ENCODE measurements at regions of chr6 and their contacts with region 1.

Region 1: DNA sequence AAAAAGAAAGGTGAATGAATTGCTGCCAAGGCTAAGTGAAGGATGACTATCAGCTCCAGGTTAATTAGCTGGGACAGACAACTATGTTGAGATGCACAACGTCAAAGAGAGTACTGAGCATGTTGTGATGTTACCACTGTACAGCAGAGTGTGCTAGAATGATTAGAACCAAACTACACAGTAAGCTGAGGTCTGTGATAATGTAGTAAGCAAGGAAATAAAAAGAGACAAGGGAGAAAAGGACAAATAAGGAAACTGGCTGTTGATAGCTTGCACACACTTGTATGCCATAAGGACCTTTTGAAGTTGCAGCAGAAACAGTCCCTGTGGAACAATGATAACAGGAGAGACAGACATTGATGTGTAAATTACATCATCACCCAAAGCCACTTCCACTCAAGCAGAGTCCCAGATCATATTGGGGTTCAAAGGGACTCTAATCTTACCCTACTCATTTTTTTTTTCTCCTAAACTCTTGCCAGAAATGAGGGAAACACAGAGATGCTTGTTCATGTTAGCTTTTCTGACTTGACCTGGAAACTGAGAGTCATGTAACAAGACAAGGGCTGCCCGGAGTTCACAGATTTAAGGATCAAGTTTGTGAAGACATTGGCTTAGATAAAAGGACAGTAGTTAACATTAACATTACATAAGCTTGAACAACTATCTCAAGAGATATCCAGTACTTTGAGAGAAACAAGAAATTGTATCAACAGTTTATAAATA is 189.9 kb downstream of the CENPW start:
- DNase-seq: no peak
- H3K4me3 ChIP-seq: no peak overlapping the region
- H3K4me3 Mint-ChIP-seq: no peak overlapping the region
- H3K27ac Mint-ChIP-seq: no peak overlapping the region
- H3K4me1 ChIP-seq: no peaks in the 10 kb centered on the region
- H3K4me1 Mint-ChIP-seq: no peaks in the 10 kb centered on the region
- H3K27me3 ChIP-seq: no peaks in the 10 kb centered on the region
- H3K27me3 Mint-ChIP-seq: no peaks in the 10 kb centered on the region
- CTCF ChIP-seq: no peak

Region 2: DNA sequence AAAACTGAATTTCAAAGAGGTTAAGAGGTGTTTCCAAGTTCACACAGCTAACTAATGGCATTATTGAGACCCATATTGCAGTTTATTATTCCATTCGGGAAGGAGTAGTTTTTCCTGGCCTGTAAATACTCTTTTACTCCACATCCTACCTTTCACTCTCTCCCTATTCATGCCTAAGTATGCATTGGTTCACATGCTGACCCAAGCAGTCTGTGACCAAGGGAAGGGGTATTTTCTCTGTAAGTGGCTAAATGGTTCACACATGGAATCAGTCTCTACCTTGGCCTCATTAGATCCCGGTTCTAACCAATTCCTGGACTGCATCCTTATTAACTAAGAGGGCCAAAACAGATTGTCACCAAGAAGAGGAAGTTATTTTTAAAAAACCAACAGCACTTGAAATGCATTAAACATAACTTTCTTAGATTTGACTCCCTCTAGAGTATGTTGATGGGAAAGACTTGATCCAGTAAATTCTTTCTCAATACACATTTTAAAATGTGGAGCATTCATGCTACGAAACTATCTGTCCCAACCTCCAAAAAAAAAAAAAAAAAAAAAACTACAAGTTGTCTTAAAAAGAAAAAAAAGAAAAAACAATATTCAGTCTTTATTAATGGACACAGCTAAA is 570.8 kb after region 1 on chr6:
- CTCF ChIA-PET with region 1: no interaction called
- POLR2A ChIA-PET with region 1: no interaction called
- intact Hi-C with region 1: loop called (anchors 1 kb)
- DNase-seq: no peak
- H3K4me3 ChIP-seq: no peak overlapping the region
- H3K4me3 Mint-ChIP-seq: no peak overlapping the region
- H3K27ac Mint-ChIP-seq: no peak overlapping the region
- H3K4me1 ChIP-seq: peaks cover 5% of the 10 kb centered on the region
- H3K4me1 Mint-ChIP-seq: peaks cover 5% of the 10 kb centered on the region
- H3K27me3 ChIP-seq: no peaks in the 10 kb centered on the region
- H3K27me3 Mint-ChIP-seq: no peaks in the 10 kb centered on the region
- CTCF ChIP-seq: peak; percentile 34 to 36

Measured in Caco-2 (cell line).